HCT116 (cell line): ENCODE measurements at regions of chr5 and their contacts with region 1.

Region 1: GRCh38 chr5:79020861-79021561 is 35.9 kb upstream of the ARSB start:
- DNase-seq: peak; percentile 58
- ATAC-seq: peak; percentile 92
- H3K4me3 ChIP-seq: peak overlapping the region in 1 of 2 experiments; percentile 13; a peak in 2 of 4 replicates
- H3K27ac ChIP-seq: no peak overlapping the region
- H3K4me1 ChIP-seq: peaks cover 2 to 15% of the 10 kb centered on the region in 2 experiments; a peak in 2 of 4 replicates
- H3K27me3 ChIP-seq: no peaks in the 10 kb centered on the region
- CTCF ChIP-seq: peak; percentile 68 to 95 (median 82)
- POLR2A ChIP-seq: no peak
- RAD21 ChIP-seq: peak; percentile 81

Region 2: GRCh38 chr5:78899922-78900362 is 121.1 kb before region 1 on chr5:
- CTCF ChIA-PET with region 1: interaction called, 44 read pairs
- POLR2A ChIA-PET with region 1: interaction called, 3 read pairs
- RAD21 ChIA-PET with region 1: interaction called, 3 to 4 read pairs
- intact Hi-C with region 1: loop called (anchors 5 kb)
- DNase-seq: peak; percentile 44
- ATAC-seq: peak; percentile 86
- H3K4me3 ChIP-seq: no peak overlapping the region
- H3K27ac ChIP-seq: no peak overlapping the region
- H3K4me1 ChIP-seq: no peaks in the 10 kb centered on the region
- H3K27me3 ChIP-seq: no peaks in the 10 kb centered on the region
- CTCF ChIP-seq: peak; percentile 76 to 96 (median 91)
- POLR2A ChIP-seq: no peak
- RAD21 ChIP-seq: peak; percentile 91

Region 3: DNA sequence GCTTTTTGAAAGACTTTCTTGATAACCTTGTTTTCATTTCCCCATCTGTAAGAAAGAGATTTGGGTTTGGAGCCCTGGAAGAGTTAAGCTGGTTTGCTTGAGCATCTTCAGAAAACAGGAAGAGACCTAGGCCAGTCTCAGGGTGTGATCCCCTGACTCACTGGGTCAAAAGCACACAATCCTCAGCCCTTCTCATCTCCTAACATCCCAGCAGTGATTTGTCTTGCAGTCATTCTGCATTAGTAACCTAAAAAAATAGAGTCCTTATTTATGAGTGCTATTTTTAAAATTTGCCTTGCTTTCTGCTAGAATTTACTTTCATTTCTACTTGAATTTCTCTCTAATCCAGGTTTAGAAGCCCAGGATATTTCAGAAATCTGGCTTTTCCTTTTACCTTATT is 19.5 kb before region 1 on chr5:
- CTCF ChIA-PET with region 1: interaction called, 13 read pairs
- POLR2A ChIA-PET with region 1: no interaction called
- RAD21 ChIA-PET with region 1: no interaction called
- intact Hi-C with region 1: no loop called
- DNase-seq: no peak
- ATAC-seq: no peak
- H3K4me3 ChIP-seq: no peak overlapping the region
- H3K27ac ChIP-seq: no peak overlapping the region
- H3K4me1 ChIP-seq: no peaks in the 10 kb centered on the region
- H3K27me3 ChIP-seq: no peaks in the 10 kb centered on the region
- CTCF ChIP-seq: no peak
- POLR2A ChIP-seq: no peak
- RAD21 ChIP-seq: no peak

Region 4: DNA sequence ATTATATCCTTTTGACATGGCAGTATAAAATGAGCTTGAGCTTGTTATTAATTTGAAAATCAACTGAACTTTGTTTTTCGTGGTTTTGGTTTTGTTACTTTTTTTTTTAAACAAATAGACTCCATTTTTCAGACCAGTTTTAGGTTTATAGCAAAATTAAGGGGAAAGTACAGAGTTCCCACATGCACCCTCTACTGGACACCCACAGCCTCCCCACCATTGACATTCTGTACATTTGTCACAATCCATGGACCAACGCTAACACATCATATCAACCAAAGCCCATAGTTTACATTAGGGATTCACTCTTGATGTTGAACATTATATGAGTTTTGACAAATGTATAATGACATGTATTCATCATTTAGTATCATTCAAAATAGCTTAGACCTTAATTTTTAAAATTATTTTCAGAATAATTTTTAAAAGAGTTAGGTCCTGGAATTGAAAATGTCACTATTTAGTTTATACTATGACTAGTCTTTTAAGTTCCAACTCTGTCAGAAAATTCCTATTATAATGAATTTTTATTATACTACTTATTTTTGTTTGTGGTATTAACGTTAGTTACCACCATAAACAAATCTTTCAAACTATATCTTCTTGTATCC is 179.7 kb after region 1 on chr5:
- CTCF ChIA-PET with region 1: interaction called, 6 read pairs
- POLR2A ChIA-PET with region 1: no interaction called
- RAD21 ChIA-PET with region 1: no interaction called
- intact Hi-C with region 1: loop called (anchors 5 kb)
- DNase-seq: no peak
- ATAC-seq: peak; percentile 84
- H3K4me3 ChIP-seq: no peak overlapping the region
- H3K27ac ChIP-seq: no peak overlapping the region
- H3K4me1 ChIP-seq: peaks cover 0 to 20% of the 10 kb centered on the region in 2 experiments; a peak in 3 of 4 replicates
- H3K27me3 ChIP-seq: no peaks in the 10 kb centered on the region
- CTCF ChIP-seq: peak in 2 of 3 experiments; percentile 69 to 71; a peak in 4 of 6 replicates
- POLR2A ChIP-seq: no peak
- RAD21 ChIP-seq: peak; percentile 42

Region 5: GRCh38 chr5:79535477-79536192 is 514.6 kb after region 1 on chr5:
- CTCF ChIA-PET with region 1: interaction called, 15 read pairs
- POLR2A ChIA-PET with region 1: no interaction called
- RAD21 ChIA-PET with region 1: interaction called in 1 of 2 experiments, 8 read pairs
- intact Hi-C with region 1: loop called (anchors 10 kb)
- DNase-seq: no peak
- ATAC-seq: no peak; the same call in 1 of the 2 replicates
- H3K4me3 ChIP-seq: no peak overlapping the region
- H3K27ac ChIP-seq: no peak overlapping the region
- H3K4me1 ChIP-seq: no peaks in the 10 kb centered on the region
- H3K27me3 ChIP-seq: no peaks in the 10 kb centered on the region
- CTCF ChIP-seq: peak in 2 of 3 experiments; percentile 23 to 39; a peak in 3 of 6 replicates
- POLR2A ChIP-seq: no peak
- RAD21 ChIP-seq: peak; percentile 53

Region 6: GRCh38 chr5:79837761-79838605 is 817.0 kb after region 1 on chr5:
- CTCF ChIA-PET with region 1: no interaction called
- POLR2A ChIA-PET with region 1: no interaction called
- RAD21 ChIA-PET with region 1: no interaction called
- intact Hi-C with region 1: no loop called
- DNase-seq: no peak
- ATAC-seq: no peak
- H3K4me3 ChIP-seq: no peak overlapping the region
- H3K27ac ChIP-seq: no peak overlapping the region
- H3K4me1 ChIP-seq: no peaks in the 10 kb centered on the region
- H3K27me3 ChIP-seq: peaks cover 6% of the 10 kb centered on the region; the same call in 1 of the 2 replicates
- CTCF ChIP-seq: no peak
- POLR2A ChIP-seq: no peak
- RAD21 ChIP-seq: no peak

Region 7: DNA sequence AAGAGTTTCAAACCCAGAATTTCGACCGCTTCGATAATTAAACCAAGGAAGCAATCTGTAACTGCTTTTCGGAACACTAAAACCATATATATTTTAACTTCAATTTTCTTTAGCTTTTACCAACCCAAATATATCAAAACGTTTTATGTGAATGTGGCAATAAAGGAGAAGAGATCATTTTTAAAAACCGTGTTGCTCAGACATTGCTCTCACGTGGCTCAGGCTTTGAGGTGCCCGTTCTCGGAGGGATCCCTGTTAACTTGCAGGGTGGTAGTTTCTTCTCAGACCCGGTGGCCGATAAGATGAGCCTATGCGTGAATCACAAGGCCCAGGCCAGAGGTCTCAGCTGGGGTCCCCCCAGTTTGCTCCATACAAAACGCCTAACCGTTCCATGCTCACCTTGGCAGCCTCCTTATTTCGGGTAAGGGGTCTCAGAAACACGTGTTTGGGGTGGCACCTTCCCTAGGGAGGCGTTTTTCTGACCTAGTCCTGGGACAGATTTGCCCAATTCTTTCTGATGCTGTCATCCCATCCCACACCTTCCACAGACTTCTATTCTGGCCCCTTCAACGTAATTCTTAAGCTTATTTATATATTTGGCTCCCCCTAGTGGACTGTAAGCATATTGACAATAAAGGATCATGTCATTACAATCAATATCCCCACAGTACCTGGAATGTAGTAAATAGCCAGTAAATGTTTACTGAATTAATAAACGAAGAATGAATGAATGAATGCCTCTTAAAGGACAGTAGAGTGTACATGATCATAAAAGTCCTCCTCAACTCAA is 1062.3 kb after region 1 on chr5:
- CTCF ChIA-PET with region 1: interaction called, 24 read pairs
- POLR2A ChIA-PET with region 1: no interaction called
- RAD21 ChIA-PET with region 1: interaction called, 3 to 5 read pairs
- intact Hi-C with region 1: loop called (anchors 5 kb)
- DNase-seq: peak; percentile 71
- ATAC-seq: peak; percentile 82
- H3K4me3 ChIP-seq: peak overlapping the region in 1 of 2 experiments; percentile 23; a peak in 2 of 4 replicates
- H3K27ac ChIP-seq: no peak overlapping the region
- H3K4me1 ChIP-seq: peaks cover 6 to 18% of the 10 kb centered on the region in 2 experiments; a peak in 2 of 4 replicates
- H3K27me3 ChIP-seq: no peaks in the 10 kb centered on the region
- CTCF ChIP-seq: peak; percentile 63 to 86 (median 78)
- POLR2A ChIP-seq: no peak
- RAD21 ChIP-seq: peak; percentile 90